A549 (cell line): ENCODE measurements at regions of chr10 and their contacts with region 1.

Region 1: DNA sequence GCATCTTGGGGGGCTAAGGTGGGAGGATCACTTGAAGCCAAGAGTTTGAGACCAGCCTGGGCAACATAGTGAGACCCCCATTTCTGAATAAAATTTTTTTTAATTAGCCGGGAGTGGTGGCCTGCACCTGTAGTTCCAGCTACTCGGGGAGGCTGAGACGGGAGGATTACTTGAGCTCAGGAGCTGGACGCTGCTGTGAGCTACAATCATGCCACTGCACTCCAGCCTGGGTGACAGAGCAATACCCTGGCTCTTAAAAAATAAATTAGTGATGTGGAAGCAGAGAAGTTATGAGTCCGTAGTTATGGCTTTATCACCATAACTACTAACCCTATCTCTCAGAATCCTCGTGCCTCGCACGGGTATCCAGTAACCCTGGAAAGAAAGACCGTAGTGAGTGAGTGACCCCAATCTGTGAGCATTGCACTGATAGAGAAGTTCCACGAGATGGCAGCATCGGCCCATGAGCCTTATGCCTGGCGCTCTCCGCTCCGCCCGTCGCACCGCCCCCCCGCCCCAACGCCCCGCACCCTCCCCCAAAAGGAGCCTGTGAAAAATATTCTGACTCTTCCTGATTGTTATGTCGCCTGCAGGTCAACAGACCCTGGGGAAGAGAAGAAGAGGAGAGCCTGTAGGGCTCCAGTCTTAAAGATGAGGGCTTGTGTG is 4.9 kb upstream of the SLC29A3 start:
- DNase-seq: peak; percentile 55 to 70
- ATAC-seq: peak; percentile 52 to 77; a peak in 3 of 6 replicates
- H3K4me3 ChIP-seq: no peak overlapping the region
- H3K27ac ChIP-seq: peak overlapping the region; percentile 39 to 77; a peak in 5 of 6 replicates
- H3K4me1 ChIP-seq: 0 out of 3 replicates have a peak, but pooled peaks cover 3% of the 10 kb centered on the region
- CTCF ChIP-seq: peak; percentile 93
- EP300 ChIP-seq: no peak
- POLR2A ChIP-seq: no peak
- RAD21 ChIP-seq: peak; percentile 87 to 98

Region 2: GRCh38 chr10:71205468-71205867 is 108.7 kb before region 1 on chr10:
- CTCF ChIA-PET with region 1: no interaction called
- POLR2A ChIA-PET with region 1: no interaction called
- DNase-seq: no peak
- ATAC-seq: no peak
- H3K4me3 ChIP-seq: no peak overlapping the region
- H3K27ac ChIP-seq: no peak overlapping the region
- H3K4me1 ChIP-seq: no peaks in the 10 kb centered on the region
- CTCF ChIP-seq: no peak
- EP300 ChIP-seq: no peak
- POLR2A ChIP-seq: no peak
- RAD21 ChIP-seq: no peak

Region 3: DNA sequence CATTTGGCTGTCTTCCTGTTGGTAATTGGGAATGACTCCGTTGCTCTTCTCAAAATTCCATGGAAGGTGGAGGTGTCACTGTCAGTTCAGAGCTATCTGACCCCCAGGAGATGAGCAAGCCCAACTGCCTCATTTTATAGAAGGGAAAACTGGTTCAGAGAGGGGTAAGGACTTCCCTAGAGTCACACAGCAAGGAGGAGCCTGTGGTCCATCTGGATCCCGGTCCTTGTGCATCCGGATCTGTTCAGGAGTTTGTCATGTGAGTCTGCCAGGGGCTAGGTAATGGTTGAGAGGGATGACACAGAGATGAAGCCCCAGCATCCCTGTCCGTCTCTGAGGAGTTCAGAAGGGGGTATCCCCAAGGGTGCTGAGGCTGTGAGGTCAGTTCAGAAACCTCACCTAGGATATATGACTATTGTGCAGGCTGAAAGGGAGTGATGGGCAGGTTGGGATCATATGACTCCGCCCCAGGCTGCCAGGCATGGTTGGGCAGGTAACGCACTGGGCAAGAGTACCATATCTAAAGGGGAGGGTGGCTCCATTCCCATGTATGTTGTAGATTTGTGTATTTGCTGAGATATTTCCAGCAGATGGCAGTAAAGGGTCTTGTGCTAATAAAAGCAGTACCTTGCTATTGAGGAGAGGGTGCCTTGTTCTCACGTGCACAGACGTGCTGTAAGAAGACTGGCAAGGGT is 11.1 kb before region 1 on chr10:
- CTCF ChIA-PET with region 1: interaction called, 41 read pairs
- POLR2A ChIA-PET with region 1: no interaction called
- DNase-seq: peak; percentile 73
- ATAC-seq: peak; percentile 75 to 90
- H3K4me3 ChIP-seq: no peak overlapping the region
- H3K27ac ChIP-seq: no peak overlapping the region
- H3K4me1 ChIP-seq: no peaks in the 10 kb centered on the region
- CTCF ChIP-seq: peak; percentile 56
- EP300 ChIP-seq: no peak
- POLR2A ChIP-seq: no peak
- RAD21 ChIP-seq: peak; percentile 37 to 52; a peak in 4 of 5 replicates

Region 4: DNA sequence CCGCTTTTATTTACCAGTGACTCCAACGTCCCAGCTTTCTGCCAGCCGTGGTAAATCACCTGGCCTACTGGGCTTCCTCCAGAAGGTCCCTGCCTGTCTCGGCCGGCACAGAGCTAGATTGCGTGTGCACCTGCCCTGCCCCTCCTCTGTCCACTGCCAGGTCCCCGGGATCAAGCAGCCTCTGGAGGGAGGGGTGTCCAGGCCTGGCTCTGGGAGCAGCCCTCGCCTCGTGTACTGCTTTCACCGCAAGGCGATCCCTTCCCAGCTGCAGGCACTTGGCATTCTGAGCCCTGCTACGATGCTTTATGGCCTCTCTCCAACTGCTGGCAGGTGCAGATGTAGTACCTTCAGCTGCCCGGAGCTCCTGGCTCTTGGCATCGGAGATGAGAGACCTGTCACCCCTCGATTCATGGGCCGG is 12.3 kb after region 1 on chr10:
- CTCF ChIA-PET with region 1: interaction called, 48 read pairs
- POLR2A ChIA-PET with region 1: interaction called, 8 read pairs
- DNase-seq: no peak
- ATAC-seq: no peak
- H3K4me3 ChIP-seq: no peak overlapping the region
- H3K27ac ChIP-seq: no peak overlapping the region
- H3K4me1 ChIP-seq: peaks cover 6% of the 10 kb centered on the region; the same call in 1 of the 3 replicates
- CTCF ChIP-seq: no peak
- EP300 ChIP-seq: no peak
- POLR2A ChIP-seq: no peak
- RAD21 ChIP-seq: no peak

Region 5: GRCh38 chr10:71623098-71623985 is 309.2 kb after region 1 on chr10:
- CTCF ChIA-PET with region 1: interaction called, 22 read pairs
- POLR2A ChIA-PET with region 1: no interaction called
- DNase-seq: peak; percentile 30 to 68
- ATAC-seq: peak; percentile 81 to 87
- H3K4me3 ChIP-seq: no peak overlapping the region
- H3K27ac ChIP-seq: peak overlapping the region in 1 of 2 experiments; percentile 52; a peak in 2 of 6 replicates
- H3K4me1 ChIP-seq: peaks cover 9% of the 10 kb centered on the region
- CTCF ChIP-seq: 0 out of 3 replicates have a peak, but pooled peaks have one; percentile 12
- EP300 ChIP-seq: no peak
- POLR2A ChIP-seq: no peak
- RAD21 ChIP-seq: peak in 1 of 2 experiments; percentile 32; a peak in 1 of 5 replicates

Region 6: DNA sequence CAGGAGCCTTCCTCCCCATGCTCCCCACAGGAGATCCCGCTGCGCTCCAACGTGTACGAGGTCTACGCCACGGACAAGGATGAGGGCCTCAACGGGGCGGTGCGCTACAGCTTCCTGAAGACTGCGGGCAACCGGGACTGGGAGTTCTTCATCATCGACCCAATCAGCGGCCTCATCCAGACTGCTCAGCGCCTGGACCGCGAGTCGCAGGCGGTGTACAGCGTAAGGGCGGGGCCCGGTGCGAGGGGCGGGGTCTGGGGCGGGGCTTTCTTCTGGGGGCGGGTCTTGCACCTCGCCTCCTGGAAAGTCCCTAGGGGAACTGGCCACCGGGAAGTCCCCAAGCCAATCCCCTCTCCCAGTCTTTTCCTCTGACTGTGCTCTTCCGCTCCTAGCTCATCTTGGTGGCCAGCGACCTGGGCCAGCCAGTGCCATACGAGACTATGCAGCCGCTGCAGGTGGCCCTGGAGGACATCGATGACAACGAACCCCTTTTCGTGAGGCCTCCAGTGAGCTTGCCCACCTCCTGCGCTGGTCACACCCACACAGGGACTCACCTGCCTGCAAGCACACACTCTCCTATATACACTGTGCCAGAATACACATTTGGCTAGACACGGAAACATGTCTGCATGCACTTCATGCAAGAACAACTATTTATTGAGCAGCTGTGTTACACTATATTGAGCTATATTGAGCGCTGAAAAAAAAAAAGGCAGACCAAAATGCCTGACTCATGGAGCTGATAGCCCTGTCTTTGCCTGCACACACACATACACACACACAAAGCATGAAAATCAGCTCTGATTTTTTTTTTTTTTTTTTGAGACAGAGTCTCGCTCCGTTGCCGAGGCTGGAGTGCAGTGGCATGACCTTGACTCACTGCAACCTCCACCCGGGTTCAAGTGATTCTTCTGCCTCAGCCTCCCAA is 491.9 kb after region 1 on chr10:
- CTCF ChIA-PET with region 1: interaction called, 20 read pairs
- POLR2A ChIA-PET with region 1: no interaction called
- DNase-seq: peak in 1 of 2 experiments; percentile 22
- ATAC-seq: peak; percentile 5 to 27; a peak in 5 of 6 replicates
- H3K4me3 ChIP-seq: no peak overlapping the region
- H3K27ac ChIP-seq: no peak overlapping the region
- H3K4me1 ChIP-seq: no peaks in the 10 kb centered on the region
- CTCF ChIP-seq: no peak
- EP300 ChIP-seq: no peak
- POLR2A ChIP-seq: no peak
- RAD21 ChIP-seq: no peak